ENCODE measurements at regions of chr7 and their contacts with region 1.

Region 1: GRCh38 chr7:79806161-79806734 is 328.4 kb upstream of the GNAI1 start:
- DNase-seq: no peak
- H3K4me3 ChIP-seq: no peak overlapping the region
- H3K4me3 Mint-ChIP-seq: no peak overlapping the region
- H3K27ac Mint-ChIP-seq: no peak overlapping the region
- H3K4me1 ChIP-seq: no peaks in the 10 kb centered on the region
- H3K4me1 Mint-ChIP-seq: peaks cover 7% of the 10 kb centered on the region
- H3K27me3 ChIP-seq: no peaks in the 10 kb centered on the region; the same call in 1 of the 2 replicates
- H3K27me3 Mint-ChIP-seq: no peaks in the 10 kb centered on the region
- CTCF ChIP-seq: peak; percentile 23 to 33

Region 2: GRCh38 chr7:80018941-80019752 is 212.9 kb after region 1 on chr7:
- CTCF ChIA-PET with region 1: no interaction called
- POLR2A ChIA-PET with region 1: no interaction called
- intact Hi-C with region 1: loop called (anchors 1 kb)
- DNase-seq: peak; percentile 37 to 41
- H3K4me3 ChIP-seq: no peak overlapping the region
- H3K4me3 Mint-ChIP-seq: no peak overlapping the region
- H3K27ac Mint-ChIP-seq: no peak overlapping the region
- H3K4me1 ChIP-seq: no peaks in the 10 kb centered on the region; the same call in 1 of the 2 replicates
- H3K4me1 Mint-ChIP-seq: no peaks in the 10 kb centered on the region
- H3K27me3 ChIP-seq: no peaks in the 10 kb centered on the region
- H3K27me3 Mint-ChIP-seq: no peaks in the 10 kb centered on the region
- CTCF ChIP-seq: peak; percentile 78 to 95